Gastrocnemius medialis (tissue), 4 donors: ENCODE measurements at regions of chr5 and their contacts with region 1.

Region 1: DNA sequence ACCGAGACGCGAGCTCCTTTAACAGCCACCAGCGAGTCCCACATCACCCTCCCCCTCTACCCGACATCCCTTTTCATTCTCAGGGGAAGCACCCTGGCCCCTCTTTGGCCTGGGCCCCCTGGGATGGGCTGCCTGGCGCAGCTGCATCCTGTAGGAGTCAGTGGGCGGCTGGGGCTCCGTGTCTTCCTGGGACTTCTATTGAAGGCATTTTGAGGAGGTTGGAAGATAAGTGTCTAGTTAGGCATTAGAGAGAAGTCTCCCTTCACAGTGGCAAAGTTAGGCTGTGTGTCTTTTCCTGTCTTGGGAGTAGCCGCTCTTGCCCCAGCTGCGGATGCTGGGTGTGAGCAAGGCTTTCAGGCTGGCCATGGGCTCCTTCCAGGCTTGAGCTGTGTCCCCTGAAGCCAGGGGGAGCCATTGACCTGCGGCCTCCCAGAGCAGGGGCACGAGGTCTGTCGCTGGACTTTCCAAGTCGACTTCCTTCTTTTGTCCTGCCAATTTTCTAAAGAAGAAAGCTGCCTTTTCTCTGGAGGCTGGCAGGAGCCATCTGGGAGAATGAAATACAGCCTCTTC is 18.6 kb upstream of the NKD2 start:
- DNase-seq: peak; percentile 59 to 63
- ATAC-seq: peak; percentile 63 to 70
- H3K4me3 ChIP-seq: no peak overlapping the region
- H3K27ac ChIP-seq: peak overlapping the region in 1 of 4 donors; percentile 7
- H3K4me1 ChIP-seq: peaks cover 4 to 7% of the 10 kb centered on the region in 2 donors
- H3K27me3 ChIP-seq: peaks cover 0 to 10% (median 4%) of the 10 kb centered on the region in 3 donors
- CTCF ChIP-seq: peak; percentile 23 to 53 (median 44)
- POLR2A ChIP-seq: no peak

Region 2: DNA sequence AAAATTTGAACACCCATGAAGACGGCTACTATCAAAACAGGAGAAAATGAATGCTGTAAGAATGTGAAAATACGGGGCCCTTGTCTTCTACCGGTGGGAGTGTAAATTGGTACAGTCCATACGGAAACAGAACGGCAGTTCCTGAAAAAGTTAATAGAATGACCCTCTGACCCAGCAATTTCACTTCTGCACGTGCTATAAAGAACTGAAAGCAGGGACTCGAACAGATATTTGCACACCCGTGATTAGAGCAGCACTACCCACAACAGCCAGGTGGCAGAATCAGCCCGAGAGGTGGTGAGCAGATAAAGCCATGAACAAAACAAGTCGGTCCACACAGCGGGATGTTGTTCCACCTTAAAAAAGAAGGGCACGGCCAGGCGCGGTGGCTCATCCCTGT is 144.4 kb after region 1 on chr5:
- in situ Hi-C with region 1: loop called in 2 of 4 experiments (anchors 10 to 25 kb)
- intact Hi-C with region 1: no loop called
- DNase-seq: no peak
- ATAC-seq: no peak
- H3K4me3 ChIP-seq: no peak overlapping the region
- H3K27ac ChIP-seq: peak overlapping the region in 2 of 4 donors; percentile 4 to 31
- H3K4me1 ChIP-seq: no peaks in the 10 kb centered on the region
- H3K27me3 ChIP-seq: no peaks in the 10 kb centered on the region
- CTCF ChIP-seq: no peak
- POLR2A ChIP-seq: no peak